ENCODE measurements at regions of chrX and their contacts with region 1.

Region 1: GRCh38 chrX:10685923-10686590 is 65.7 kb upstream of the MID1 start:
- DNase-seq: no peak
- H3K4me3 ChIP-seq: no peak overlapping the region
- H3K27ac ChIP-seq: no peak overlapping the region
- H3K4me1 ChIP-seq: no peaks in the 10 kb centered on the region
- H3K27me3 ChIP-seq: peaks cover 0 to 6% of the 10 kb centered on the region in 2 donors
- CTCF ChIP-seq: no peak
- POLR2A ChIP-seq: no peak

Region 2: DNA sequence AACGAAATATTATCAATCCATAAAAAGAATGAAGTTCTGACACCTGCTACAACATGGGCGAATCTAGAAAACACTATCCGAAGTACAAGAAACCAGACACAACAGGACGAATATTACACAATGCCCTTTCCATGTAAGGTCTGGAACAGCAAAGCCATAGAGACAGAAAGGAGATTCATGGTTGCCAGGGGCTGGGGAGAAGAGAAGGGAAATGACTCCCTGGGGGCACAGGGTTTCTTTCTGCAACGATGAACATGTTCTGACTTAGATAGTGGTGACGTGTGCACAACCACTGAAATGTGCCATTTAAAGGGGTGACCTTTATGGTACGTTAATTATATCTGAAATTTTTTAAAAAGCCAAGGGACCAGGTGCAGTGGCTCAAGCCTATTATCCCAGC is 948.7 kb before region 1 on chrX:
- intact Hi-C with region 1: loop called (anchors 5 kb)
- DNase-seq: no peak
- H3K4me3 ChIP-seq: no peak overlapping the region
- H3K27ac ChIP-seq: no peak overlapping the region
- H3K4me1 ChIP-seq: no peaks in the 10 kb centered on the region
- H3K27me3 ChIP-seq: peaks cover 0 to 10% of the 10 kb centered on the region in 2 donors
- CTCF ChIP-seq: no peak
- POLR2A ChIP-seq: no peak

Region 3: GRCh38 chrX:10206317-10206716 is 479.7 kb before region 1 on chrX:
- intact Hi-C with region 1: loop called (anchors 5 kb)
- DNase-seq: no peak
- H3K4me3 ChIP-seq: no peak overlapping the region
- H3K27ac ChIP-seq: no peak overlapping the region
- H3K4me1 ChIP-seq: no peaks in the 10 kb centered on the region
- H3K27me3 ChIP-seq: peaks cover 0 to 17% of the 10 kb centered on the region in 2 donors
- CTCF ChIP-seq: no peak
- POLR2A ChIP-seq: no peak

Region 4: DNA sequence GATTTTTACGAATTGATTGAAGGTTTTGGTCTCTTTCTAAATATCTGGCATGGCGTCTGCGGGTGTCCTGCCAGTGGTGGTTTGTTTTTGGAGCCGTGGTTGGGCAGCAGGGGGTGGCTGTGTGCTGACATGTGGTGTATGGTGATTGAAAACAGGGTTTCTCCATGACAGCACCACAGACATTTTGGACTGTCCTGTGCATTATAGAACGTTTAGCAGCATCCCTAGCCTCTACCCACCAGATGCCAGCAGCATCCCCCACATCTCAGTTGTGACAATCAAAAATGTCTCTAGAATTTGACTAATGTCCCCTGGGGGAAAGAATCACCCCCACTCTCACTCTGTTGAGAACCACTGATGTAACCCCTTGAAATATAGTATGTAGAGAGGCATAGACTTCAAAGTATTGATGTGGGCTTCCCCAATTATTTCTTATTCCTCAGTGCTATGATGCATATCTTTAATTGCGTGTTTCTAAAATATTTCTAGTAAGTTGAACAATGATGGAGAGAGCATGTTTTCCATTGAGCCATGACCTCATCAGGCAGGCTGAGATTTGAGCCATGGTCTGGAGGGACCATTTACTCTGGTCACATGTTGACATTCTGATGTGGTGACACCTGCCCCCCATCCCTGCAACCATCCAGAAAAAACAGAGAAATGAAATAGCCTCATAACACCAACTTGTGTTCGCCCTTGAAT is 11.7 kb after region 1 on chrX:
- intact Hi-C with region 1: loop called (anchors 1 kb)
- DNase-seq: no peak
- H3K4me3 ChIP-seq: no peak overlapping the region
- H3K27ac ChIP-seq: no peak overlapping the region
- H3K4me1 ChIP-seq: no peaks in the 10 kb centered on the region
- H3K27me3 ChIP-seq: no peaks in the 10 kb centered on the region
- CTCF ChIP-seq: no peak
- POLR2A ChIP-seq: no peak

Measured in breast epithelium (tissue), 4 donors.